Right ventricle myocardium inferior (tissue), 1 donor: ENCODE measurements at regions of chr11 and their contacts with region 1.

Region 1: GRCh38 chr11:86715611-86716010 is 43.2 kb upstream of the ME3 start:
- DNase-seq: no peak
- ATAC-seq: no peak

Region 2: DNA sequence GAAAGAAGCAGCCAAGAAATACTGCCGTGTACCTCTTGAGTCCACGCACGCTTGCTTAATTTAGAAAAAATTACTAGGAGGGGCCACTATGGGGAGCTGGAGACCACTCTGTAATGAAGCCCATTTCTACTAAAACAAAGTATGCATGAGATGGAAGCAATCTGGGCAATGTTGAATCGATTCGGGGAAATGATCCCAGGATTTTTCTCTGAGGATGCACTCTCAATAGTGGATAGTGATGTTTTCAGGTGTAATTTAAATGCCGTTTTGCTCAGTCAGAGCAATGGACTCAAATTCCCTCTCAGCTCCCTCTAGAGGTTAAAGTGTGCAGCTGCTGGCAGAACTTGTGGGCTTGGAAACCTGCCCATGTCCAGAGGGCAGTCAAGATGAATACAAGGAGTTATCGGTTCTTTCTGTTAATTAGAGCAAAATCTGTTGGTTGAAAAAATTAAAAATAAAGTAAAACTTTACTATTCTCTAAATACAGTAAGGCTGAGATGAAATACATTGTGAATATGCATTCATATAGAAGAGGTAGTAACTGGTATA is 107.3 kb before region 1 on chr11:
- intact Hi-C with region 1: no loop called
- DNase-seq: peak; percentile 65
- ATAC-seq: peak; percentile 74

Region 3: DNA sequence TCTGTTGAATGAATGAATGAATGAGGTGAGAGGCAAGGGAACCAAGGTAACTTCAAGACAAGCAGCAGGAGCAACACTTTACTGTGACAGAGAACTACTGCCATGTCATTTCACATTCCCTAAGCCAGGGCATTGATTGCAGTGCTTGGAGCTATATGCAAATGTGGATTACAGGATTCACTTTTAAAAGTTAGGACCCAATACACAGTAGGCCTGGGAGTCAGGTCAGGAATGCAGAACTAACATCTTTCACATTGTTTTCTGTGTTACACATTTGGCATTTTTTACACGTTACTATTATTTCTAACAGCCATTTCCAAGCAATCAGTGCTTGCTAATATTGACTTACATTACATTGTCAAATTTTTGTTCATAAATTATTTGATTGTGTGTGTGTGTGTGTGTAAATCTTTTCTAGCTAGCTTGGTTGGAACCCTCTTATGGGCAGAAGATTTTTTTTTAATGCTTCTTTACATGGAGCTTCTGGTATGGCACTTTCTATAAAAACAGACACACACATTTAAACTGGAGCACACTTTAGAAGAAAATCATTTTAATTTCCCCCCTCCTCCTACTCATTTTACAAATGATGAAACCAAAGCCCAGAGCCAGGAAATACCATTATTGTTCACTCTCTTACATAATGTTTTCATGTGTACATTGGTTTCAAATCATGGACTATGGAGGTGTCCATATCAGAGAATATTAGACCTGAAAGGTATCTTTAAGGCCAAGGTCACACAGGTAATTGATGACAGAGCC is 16.8 kb before region 1 on chr11:
- intact Hi-C with region 1: loop called (anchors 1 kb)
- DNase-seq: no peak
- ATAC-seq: no peak

Region 4: DNA sequence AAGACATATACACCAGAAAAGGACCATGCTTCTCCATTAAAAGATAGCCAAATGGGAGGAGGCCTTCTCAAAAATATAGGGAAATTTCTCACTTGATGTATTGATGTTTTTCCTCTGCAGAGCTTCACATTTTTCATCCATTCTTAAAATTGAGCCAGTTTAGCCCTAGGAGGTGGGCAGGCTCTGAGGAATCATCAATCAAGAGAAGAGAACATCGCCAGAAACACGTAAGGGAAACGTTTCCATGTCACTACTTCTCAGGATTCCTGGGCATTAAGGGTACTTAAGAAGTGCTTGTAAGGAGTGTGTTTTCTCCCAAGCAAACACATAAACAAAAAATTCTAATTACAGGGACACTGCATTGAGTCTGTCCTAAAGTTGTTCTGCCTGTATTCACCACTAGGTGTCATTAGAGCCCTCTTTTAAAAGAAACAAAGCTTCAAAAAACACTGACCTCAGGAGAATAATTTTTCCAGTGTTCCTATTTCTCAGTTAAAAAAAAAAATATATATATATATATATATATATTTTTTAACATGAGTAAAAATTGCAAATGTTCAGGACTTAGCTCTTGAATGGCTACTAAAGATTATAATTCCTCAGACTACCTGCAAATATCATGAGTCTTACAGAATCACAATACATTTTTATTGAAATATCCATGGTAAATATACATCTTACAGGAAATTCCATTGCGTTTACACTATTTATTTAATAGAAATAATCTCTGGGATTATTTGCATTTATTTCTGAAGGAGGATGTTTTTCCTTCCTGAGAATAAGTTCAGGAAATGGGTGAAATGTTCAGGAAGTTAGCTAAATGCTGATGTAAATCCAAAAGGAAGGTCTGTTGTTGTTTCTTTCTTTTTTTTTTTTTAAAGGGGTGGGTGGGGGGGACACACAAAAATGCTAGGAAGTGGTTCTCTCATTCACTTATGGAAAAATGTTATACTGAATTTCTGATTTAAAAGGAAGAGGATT is 223.6 kb after region 1 on chr11:
- intact Hi-C with region 1: no loop called
- DNase-seq: no peak
- ATAC-seq: no peak